Gastrocnemius medialis (tissue), 4 donors: ENCODE measurements at regions of chr15 and their contacts with region 1.

Region 1: DNA sequence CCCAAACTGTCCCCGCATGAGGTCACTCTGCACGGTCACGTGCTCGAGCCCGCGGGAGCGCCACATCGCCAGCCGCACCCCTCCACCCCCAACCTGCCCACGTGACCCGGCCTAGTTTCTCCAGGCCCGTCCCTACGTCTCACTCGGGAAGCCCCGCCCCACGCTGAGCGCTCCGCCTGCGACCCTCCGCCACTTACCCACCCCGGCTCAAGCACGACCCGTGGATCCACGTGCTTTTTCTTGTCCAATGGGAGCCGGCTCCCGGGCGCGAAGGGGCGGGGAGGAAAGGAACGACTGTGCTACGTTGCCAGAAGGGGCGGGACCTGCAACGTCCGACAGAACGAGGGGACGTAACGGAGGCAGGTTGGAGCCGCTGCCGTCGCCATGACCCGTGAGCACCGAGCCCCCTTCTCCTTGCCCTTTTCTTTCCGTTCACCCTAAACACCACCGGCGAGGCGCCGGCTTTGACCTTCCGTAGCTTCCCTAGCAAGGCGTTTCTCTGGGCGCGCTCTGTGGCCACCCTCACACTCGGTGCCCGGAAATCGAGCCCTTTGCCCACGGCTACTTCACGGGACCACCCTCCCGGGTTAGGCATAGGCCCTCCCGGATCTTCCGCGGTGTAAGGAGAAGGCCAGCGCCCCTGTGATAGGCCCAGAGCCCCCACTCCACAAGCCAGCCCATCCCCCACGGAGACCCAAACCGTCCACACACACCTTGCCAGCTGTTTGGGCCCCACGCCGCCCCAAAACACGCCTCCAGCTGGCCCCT is at the start of gene SERF2:
- DNase-seq: peak; percentile 100
- ATAC-seq: peak; percentile 83 to 91
- H3K4me3 ChIP-seq: peak within 1 kb of the TSS; percentile 91 to 100 (median 94)
- H3K27ac ChIP-seq: peak within 1 kb of the TSS; percentile 96 to 100 (median 99)
- H3K4me1 ChIP-seq: peaks cover 40 to 46% of the 10 kb centered on the region in 2 donors
- H3K27me3 ChIP-seq: no peaks in the 10 kb centered on the region
- CTCF ChIP-seq: no peak
- POLR2A ChIP-seq: peak; percentile 99
- total RNA-seq, gene SERF2: 491 to 646 (median 617) TPM

Region 2: GRCh38 chr15:43854801-43855200 is 62.6 kb after region 1 on chr15:
- in situ Hi-C with region 1: no loop called
- intact Hi-C with region 1: no loop called
- DNase-seq: no peak
- ATAC-seq: no peak
- H3K4me3 ChIP-seq: no peak overlapping the region
- H3K27ac ChIP-seq: no peak overlapping the region
- H3K4me1 ChIP-seq: no peaks in the 10 kb centered on the region
- H3K27me3 ChIP-seq: no peaks in the 10 kb centered on the region
- CTCF ChIP-seq: no peak
- POLR2A ChIP-seq: no peak

Region 3: DNA sequence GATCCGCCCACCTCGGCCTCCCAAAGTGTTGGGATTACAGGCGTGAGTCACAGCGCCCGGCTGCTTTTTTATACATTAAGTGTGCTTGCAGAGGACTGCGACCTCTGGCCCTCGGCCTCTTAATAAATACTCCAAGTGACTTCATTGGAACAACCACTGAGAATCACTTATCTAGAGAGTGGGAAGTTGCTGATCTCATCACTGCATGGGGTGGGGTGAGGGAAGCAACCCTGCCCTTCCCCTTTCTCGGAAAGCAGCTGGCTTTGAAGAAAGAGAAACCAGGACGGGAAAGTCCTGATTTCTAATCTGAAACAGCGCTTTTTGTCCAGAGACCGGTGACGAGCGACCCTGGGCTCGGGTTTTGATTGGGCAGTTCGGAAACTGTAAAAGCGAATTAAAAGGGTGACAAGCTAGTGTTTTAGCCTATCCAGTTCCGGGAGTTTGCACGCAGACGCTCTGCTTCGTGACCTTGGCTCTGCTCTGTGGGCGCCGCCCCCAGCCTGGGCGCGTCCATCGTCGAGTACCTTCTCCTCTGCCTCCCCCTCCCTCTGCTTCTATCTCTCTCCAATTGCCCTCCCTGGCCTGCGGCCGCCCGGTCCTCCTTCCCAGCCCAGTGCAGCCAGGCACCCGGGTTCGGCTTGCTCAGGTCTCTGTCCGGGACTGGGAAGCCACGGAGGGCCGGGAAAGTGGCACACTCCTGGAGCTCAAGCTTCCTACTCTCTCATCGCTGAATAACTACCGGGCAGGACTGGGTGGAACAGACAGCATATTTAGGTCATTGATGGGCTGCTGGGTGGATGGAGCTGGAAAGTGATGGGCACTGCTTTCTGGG is 936.6 kb after region 1 on chr15:
- in situ Hi-C with region 1: loop called in 1 of 4 experiments (anchors 25 kb)
- intact Hi-C with region 1: loop called (anchors 5 kb)
- DNase-seq: peak; percentile 90 to 96
- ATAC-seq: peak; percentile 98
- H3K4me3 ChIP-seq: peak overlapping the region; percentile 60 to 98 (median 84)
- H3K27ac ChIP-seq: peak overlapping the region; percentile 87 to 100 (median 96)
- H3K4me1 ChIP-seq: peaks cover 16 to 24% of the 10 kb centered on the region in 2 donors
- H3K27me3 ChIP-seq: no peaks in the 10 kb centered on the region
- CTCF ChIP-seq: no peak
- POLR2A ChIP-seq: peak; percentile 80 to 87